ENCODE measurements at regions of chr18 and their contacts with region 1.

Region 1: GRCh38 chr18:28189400-28190239 is 12.7 kb upstream of the CDH2 start:
- DNase-seq: no peak
- H3K4me3 ChIP-seq: no peak overlapping the region
- H3K27ac ChIP-seq: no peak overlapping the region
- H3K4me1 ChIP-seq: no peaks in the 10 kb centered on the region
- H3K27me3 ChIP-seq: no peaks in the 10 kb centered on the region
- CTCF ChIP-seq: peak; percentile 61

Region 2: DNA sequence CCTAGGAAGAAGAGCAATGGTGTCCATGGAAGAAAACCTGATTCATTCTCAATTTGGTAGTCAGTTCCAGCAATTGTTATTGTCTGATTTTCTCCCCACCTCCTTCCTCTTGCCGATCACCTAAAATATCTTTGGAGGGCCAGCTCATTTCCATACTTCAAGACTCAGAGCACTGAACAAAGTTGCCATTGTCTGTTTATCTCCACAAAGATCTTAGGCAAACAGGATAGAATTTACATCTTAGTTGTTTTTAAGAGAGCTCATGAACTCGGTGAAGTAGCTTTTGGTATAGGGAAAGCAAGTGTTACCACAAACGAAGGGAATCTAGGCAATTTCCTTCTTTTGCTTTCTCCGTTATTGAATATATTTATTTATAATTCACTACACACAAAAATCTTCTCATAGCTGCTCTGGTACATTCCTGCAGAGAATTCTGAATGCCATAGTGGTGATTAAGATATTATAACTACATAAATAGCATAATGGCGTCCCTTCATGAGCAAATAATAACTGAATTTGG is 963.0 kb before region 1 on chr18:
- CTCF ChIA-PET with region 1: no interaction called
- POLR2A ChIA-PET with region 1: interaction called, 12 read pairs
- intact Hi-C with region 1: no loop called
- DNase-seq: no peak
- H3K4me3 ChIP-seq: no peak overlapping the region
- H3K27ac ChIP-seq: no peak overlapping the region
- H3K4me1 ChIP-seq: no peaks in the 10 kb centered on the region
- H3K27me3 ChIP-seq: no peaks in the 10 kb centered on the region
- CTCF ChIP-seq: no peak

Region 3: GRCh38 chr18:27769152-27769551 is 420.5 kb before region 1 on chr18:
- CTCF ChIA-PET with region 1: no interaction called
- POLR2A ChIA-PET with region 1: no interaction called
- intact Hi-C with region 1: no loop called
- DNase-seq: no peak
- H3K4me3 ChIP-seq: no peak overlapping the region
- H3K27ac ChIP-seq: no peak overlapping the region
- H3K4me1 ChIP-seq: no peaks in the 10 kb centered on the region
- H3K27me3 ChIP-seq: no peaks in the 10 kb centered on the region
- CTCF ChIP-seq: no peak

Region 4: GRCh38 chr18:28136071-28136470 is 53.5 kb before region 1 on chr18:
- CTCF ChIA-PET with region 1: interaction called, 10 read pairs
- POLR2A ChIA-PET with region 1: no interaction called
- intact Hi-C with region 1: no loop called
- DNase-seq: no peak
- H3K4me3 ChIP-seq: no peak overlapping the region
- H3K27ac ChIP-seq: no peak overlapping the region
- H3K4me1 ChIP-seq: no peaks in the 10 kb centered on the region
- H3K27me3 ChIP-seq: no peaks in the 10 kb centered on the region
- CTCF ChIP-seq: no peak

Region 5: DNA sequence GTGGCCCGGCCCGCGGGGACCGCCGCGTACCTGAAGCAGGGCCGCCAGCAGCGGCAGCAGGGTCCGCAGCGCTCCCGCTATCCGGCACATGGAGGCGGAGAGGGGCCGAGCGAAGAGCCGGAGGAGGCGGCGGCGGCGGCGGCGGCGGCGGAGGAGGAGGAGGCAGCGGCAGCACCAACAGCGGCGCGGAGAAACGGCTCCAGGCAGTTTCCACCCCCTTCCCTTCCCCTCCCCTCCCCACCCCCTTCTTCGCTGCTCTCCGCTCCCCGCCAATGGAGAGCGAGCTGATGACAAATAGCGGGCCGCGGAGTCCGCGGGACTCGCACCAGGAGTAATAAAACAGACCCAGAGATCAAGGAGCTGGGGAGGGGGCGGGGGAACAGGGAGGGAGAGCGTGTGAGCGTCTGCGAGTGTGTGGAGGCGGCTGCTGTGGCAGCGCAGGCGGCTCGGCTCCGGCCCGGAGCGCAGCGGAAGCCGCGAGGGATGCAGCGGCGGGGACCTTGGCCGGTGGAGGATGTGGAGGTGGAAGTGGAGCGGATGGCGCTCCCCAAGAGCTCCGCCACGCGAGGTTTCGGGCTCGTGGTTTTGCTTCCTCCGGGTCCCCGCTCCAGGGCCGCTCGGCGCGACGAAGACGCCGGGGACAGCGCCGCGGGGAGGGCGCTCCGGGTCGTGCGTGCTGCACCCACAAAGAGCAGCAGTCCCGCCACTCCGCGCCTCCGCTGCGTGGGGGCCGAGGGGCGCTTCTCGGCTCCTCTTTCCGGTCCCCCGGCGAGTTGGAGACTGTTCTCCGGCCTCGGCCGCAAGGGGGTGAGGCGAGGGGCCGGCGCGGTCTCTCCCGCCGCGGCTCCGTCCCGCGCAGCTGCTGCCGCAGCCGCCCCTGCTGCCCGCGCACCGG is 12.4 kb before region 1 on chr18 and contains the start of gene CDH2:
- CTCF ChIA-PET with region 1: no interaction called
- POLR2A ChIA-PET with region 1: no interaction called
- intact Hi-C with region 1: no loop called
- DNase-seq: peak in 1 of 2 experiments; percentile 16
- H3K4me3 ChIP-seq: no peak within 1 kb of the TSS
- H3K27ac ChIP-seq: no peak within 1 kb of the TSS
- H3K4me1 ChIP-seq: no peaks in the 10 kb centered on the region
- H3K27me3 ChIP-seq: no peaks in the 10 kb centered on the region
- CTCF ChIP-seq: no peak
- total RNA-seq, gene CDH2: 6.4 and 8.5 TPM in 2 replicates

Measured in PC-9 (cell line).